CD14-positive monocyte (primary cell): ENCODE measurements at regions of chr20 and their contacts with region 1.

Region 1: DNA sequence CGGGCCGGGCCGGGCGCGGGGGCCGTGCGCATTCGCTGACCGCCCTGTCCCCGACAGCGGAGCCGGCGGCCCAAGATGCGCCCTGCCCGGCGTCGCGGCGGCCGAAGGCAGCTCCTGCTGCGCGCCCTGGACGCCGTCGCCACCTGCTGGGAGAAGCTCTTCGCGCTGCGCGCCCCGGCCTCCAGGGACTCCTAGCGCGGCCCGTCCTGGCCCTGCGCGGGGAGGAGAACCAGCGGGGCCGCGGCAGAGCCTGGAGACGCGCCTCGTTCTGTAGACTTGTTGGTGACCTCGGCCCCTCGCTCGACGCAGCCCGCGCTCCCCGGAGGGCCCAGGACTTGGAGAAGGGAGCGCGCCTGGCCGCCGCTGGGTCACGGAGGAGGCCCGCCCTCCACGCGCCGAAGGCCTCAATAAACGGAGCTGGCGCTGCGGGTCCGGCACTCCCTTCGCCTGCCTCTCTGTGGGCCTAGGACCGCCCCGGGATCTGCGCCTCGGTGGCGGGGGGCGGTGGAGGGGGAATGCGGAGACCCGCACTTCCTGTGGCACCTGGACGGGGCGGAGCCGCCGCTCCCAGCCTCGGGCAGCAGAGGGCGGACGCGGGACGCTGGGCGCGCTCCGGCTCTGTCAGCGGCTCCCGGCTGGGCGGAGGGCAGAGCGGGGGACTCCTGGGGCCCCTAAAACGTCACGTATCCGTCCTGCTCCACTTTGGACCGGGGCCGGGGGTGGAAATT is 2.7 kb downstream of the C20orf204 start:
- DNase-seq: peak; percentile 50 to 57 (median 55)
- H3K4me3 ChIP-seq: peak overlapping the region; percentile 24 to 80 (median 31)
- H3K4me3 Mint-ChIP-seq: peak overlapping the region; percentile 71 to 86
- H3K27ac ChIP-seq: no peak overlapping the region
- H3K27ac Mint-ChIP-seq: no peak overlapping the region
- H3K4me1 ChIP-seq: peaks cover 24 to 40% of the 10 kb centered on the region in 2 donors
- H3K4me1 Mint-ChIP-seq: peaks cover 20% of the 10 kb centered on the region
- H3K27me3 ChIP-seq: peaks cover 24 to 56% of the 10 kb centered on the region in 2 donors
- H3K27me3 Mint-ChIP-seq: peaks cover 59 to 77% (median 60%) of the 10 kb centered on the region in 3 donors
- CTCF ChIP-seq: peak; percentile 81

Region 2: DNA sequence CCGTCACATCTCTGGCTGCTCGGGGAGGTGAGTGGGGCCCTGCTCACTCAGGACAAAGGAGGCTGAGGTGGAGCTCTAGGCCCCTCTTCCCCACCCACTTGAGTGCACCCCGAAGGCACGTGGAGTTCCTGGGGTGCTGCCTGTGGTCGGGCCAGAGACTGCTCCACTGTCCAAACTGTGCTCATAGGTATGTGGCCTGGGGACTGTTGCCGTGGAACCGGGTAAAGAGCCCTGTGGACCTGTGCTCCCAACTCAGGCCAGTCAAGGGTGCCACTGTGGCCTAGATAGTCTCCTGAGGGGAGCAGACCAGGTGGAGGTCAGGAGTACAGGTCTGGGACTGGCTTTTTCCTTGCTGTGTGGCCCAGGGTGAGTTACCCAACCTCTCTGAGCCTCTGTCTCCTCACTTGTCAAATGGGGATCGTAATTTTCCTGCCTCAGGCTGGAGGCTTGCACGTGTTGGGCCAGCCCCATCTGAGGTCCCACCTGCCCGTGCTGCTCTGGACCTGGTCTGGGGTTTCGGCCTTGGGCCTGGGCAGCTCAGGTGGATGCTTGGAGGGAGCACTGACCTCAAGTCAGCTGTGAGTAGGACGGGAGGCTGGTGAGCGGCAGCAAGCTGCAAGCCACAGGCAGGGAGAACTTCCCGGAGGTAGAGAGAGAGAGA is 81.1 kb after region 1 on chr20:
- intact Hi-C with region 1: loop called (anchors 2 kb)
- DNase-seq: no peak
- H3K4me3 ChIP-seq: peak overlapping the region; percentile 8 to 71 (median 13)
- H3K4me3 Mint-ChIP-seq: peak overlapping the region; percentile 75 to 83
- H3K27ac ChIP-seq: no peak overlapping the region
- H3K27ac Mint-ChIP-seq: no peak overlapping the region
- H3K4me1 ChIP-seq: peaks cover 8% of the 10 kb centered on the region in 2 donors
- H3K4me1 Mint-ChIP-seq: peaks cover 8% of the 10 kb centered on the region
- H3K27me3 ChIP-seq: no peaks in the 10 kb centered on the region
- H3K27me3 Mint-ChIP-seq: peaks cover 15 to 27% (median 24%) of the 10 kb centered on the region in 3 donors
- CTCF ChIP-seq: no peak